Testis (tissue), 5 donors: ENCODE measurements at regions of chr10 and their contacts with region 1.

Region 1: DNA sequence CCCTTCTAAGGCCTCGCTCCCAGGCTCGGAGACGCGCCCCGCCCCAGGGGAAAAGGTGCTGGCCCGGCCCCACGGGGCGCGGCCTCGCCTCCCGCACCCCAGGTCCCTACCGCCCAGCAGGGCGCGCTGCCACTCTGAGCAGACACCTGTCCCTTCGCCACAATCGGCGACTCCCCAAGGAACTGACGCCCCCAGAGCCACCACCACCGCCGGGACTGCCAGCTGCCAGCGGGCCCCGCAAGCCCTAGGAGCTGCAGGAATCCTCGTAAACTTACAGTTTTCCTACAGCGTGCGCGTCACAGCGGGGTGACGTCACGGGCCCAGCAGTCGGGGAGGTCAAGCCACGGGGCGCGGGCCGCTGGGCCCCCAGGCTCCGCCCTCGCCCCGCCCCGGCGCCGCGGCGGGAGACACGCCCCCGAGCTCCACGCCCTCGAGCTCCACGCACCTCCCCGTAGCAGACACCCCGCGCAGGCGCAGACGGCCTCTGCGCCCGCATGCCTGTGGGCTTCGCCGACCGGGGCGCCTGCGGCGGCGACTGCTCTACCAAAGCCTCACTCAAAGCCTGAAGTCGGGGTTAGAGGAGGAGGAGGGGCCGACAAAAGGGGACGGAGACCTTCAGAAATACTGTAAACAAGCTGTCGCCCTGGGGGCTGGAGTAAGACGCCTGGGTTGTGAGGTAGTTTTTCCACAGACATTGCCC is at the start of gene ZNF438:
- DNase-seq: peak; percentile 95
- H3K4me3 ChIP-seq: peak within 1 kb of the TSS; percentile 77 to 82
- H3K27ac ChIP-seq: peak within 1 kb of the TSS; percentile 94 to 100
- H3K4me1 ChIP-seq: peaks cover 17% of the 10 kb centered on the region
- H3K27me3 ChIP-seq: no peaks in the 10 kb centered on the region
- CTCF ChIP-seq: peak; percentile 36 to 63 (median 61)
- POLR2A ChIP-seq: no peak
- total RNA-seq, gene ZNF438: 15.3 to 17.8 TPM

Region 2: GRCh38 chr10:30783939-30784500 is 247.7 kb before region 1 on chr10:
- intact Hi-C with region 1: loop called (anchors 10 kb)
- DNase-seq: peak; percentile 86
- H3K4me3 ChIP-seq: peak overlapping the region; percentile 17 to 70
- H3K27ac ChIP-seq: peak overlapping the region; percentile 68 to 94
- H3K4me1 ChIP-seq: peaks cover 15% of the 10 kb centered on the region
- H3K27me3 ChIP-seq: no peaks in the 10 kb centered on the region
- CTCF ChIP-seq: peak; percentile 75 to 86 (median 79)
- POLR2A ChIP-seq: no peak